Naive thymus-derived CD4-positive, alpha-beta T cell (primary cell): ENCODE measurements at regions of chr10 and their contacts with region 1.

Region 1: DNA sequence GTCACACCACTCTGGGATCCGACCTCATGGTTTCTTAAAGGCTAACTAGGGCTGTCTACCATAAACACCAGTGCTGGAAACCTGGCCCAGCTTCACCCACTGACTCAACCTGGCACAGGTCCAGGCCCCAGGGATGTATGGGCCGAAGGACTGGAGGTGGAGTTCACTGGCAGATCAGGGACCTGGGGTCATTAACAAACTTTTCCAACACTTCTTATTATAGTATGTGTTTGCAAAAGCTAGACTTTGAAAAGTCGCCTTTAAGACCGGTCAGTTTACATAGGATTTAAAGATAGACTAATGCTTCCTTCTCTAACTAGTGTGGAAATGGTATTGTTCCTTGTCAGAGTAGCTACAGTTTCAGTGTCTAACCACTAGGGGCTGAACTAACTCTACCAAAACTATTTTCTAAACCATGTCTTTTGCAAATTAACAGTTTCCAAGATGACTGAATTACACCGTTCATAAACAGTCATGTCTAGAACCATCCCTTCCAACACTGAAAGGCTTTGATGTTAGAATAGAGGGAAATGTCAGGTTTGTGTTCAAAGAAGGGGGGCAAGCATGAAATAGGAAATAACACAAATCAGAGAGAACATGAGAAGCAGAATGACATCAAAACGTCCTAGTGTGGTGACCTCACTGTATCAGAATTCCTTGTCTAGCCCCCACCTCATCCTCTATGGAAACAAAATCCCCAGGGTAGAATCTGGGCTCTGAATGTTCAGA is 29.7 kb downstream of the STN1 start:
- DNase-seq: peak in 7 of 9 donors; percentile 36 to 72 (median 59)
- ATAC-seq: peak; percentile 90
- H3K4me3 ChIP-seq: no peak overlapping the region
- H3K4me3 Mint-ChIP-seq: no peak overlapping the region
- H3K27ac ChIP-seq: no peak overlapping the region
- H3K27ac Mint-ChIP-seq: peak overlapping the region in 8 of 9 donors; percentile 5 to 83 (median 38)
- H3K4me1 ChIP-seq: peaks cover 4 to 5% of the 10 kb centered on the region in 2 donors
- H3K4me1 Mint-ChIP-seq: peaks cover 6 to 33% (median 20%) of the 10 kb centered on the region in 7 donors
- H3K27me3 ChIP-seq: no peaks in the 10 kb centered on the region
- H3K27me3 Mint-ChIP-seq: no peaks in the 10 kb centered on the region

Region 2: GRCh38 chr10:103901299-103901698 is 13.0 kb after region 1 on chr10:
- CTCF ChIA-PET with region 1: interaction called, 19 read pairs
- POLR2A ChIA-PET with region 1: interaction called, 4 read pairs
- intact Hi-C with region 1: no loop called
- DNase-seq: peak in 1 of 9 donors; percentile 20
- ATAC-seq: peak; percentile 65
- H3K4me3 ChIP-seq: no peak overlapping the region
- H3K4me3 Mint-ChIP-seq: peak overlapping the region; percentile 25 to 76 (median 60)
- H3K27ac ChIP-seq: peak overlapping the region; percentile 14
- H3K27ac Mint-ChIP-seq: peak overlapping the region in 8 of 9 donors; percentile 38 to 80 (median 65)
- H3K4me1 ChIP-seq: peaks cover 14 to 38% of the 10 kb centered on the region in 2 donors
- H3K4me1 Mint-ChIP-seq: peaks cover 12 to 58% (median 51%) of the 10 kb centered on the region in 7 donors
- H3K27me3 ChIP-seq: no peaks in the 10 kb centered on the region
- H3K27me3 Mint-ChIP-seq: no peaks in the 10 kb centered on the region

Region 3: DNA sequence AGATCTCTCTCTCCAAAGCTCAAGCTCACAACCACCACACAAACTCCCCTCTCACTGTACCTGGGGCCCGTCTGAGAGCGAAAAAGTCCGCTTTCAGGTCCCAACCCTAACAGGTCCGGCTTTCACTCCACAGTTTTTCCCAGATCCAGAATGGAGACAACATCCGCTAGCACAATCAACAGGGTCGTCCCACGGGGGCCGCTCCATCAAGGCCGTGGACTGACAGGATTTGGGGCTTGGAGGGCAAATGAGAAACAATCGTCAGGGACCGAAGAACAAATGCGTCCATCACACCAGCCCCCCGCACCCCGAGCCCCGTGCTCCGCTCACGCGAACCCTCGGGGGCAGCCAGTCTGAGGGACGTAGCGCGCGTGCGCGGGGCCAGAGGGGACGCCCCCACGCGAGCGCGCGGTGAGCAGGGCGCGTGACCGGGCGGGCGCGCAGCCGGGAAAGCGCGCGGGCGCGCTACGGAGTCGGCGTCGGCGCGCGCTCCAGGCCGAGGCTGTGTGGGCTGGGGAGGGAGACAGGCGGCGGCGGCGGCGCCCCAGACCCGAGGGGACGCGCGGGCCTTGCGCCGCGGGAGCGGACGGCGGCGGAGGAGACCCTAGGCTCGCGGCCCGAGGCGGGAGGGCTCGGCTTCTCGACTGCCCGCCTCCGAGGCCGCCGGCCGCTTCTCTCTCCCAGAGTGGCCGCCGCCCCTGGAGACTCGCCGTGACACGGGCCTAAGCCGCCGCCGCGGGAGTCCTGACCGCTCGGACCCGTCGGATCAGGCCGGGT is 78.6 kb after region 1 on chr10 and contains the start of gene SLK:
- CTCF ChIA-PET with region 1: interaction called, 3 read pairs
- POLR2A ChIA-PET with region 1: interaction called, 4 read pairs
- intact Hi-C with region 1: loop called (anchors 1 kb)
- DNase-seq: peak; percentile 74 to 93 (median 87)
- ATAC-seq: peak; percentile 96
- H3K4me3 ChIP-seq: peak within 1 kb of the TSS; percentile 81
- H3K4me3 Mint-ChIP-seq: peak within 1 kb of the TSS; percentile 93 to 100 (median 98)
- H3K27ac ChIP-seq: peak within 1 kb of the TSS; percentile 78
- H3K27ac Mint-ChIP-seq: peak within 1 kb of the TSS; percentile 91 to 96 (median 94)
- H3K4me1 ChIP-seq: peaks cover 3 to 11% of the 10 kb centered on the region in 2 donors
- H3K4me1 Mint-ChIP-seq: peaks cover 17 to 56% (median 44%) of the 10 kb centered on the region in 7 donors
- H3K27me3 ChIP-seq: no peaks in the 10 kb centered on the region
- H3K27me3 Mint-ChIP-seq: no peaks in the 10 kb centered on the region
- total RNA-seq, gene SLK: 21.4 to 32.2 (median 26.2) TPM

Region 4: DNA sequence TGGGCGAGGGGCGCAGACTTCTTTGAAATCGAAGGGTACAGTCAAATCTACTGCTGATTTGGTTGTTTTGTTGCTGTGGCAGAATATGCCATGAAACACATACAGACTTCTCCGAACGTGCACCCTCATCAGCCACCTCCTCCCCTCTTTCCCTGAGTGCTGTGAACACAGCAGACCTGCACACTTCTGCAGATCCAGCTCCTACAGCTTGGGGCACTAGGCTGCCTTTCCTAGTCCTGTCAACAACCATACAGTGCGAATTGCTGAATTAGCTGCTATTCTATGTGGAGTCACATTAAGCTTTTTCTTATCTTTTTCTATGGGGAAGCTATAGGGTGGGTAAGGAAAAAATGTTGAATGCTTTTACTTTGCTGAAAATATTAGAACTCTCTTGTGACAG is 139.9 kb after region 1 on chr10:
- CTCF ChIA-PET with region 1: interaction called, 4 read pairs
- POLR2A ChIA-PET with region 1: no interaction called
- intact Hi-C with region 1: loop called in 1 of 2 experiments (anchors 1 kb)
- DNase-seq: peak in 5 of 9 donors; percentile 11 to 29 (median 15)
- ATAC-seq: peak; percentile 75
- H3K4me3 ChIP-seq: no peak overlapping the region
- H3K4me3 Mint-ChIP-seq: no peak overlapping the region
- H3K27ac ChIP-seq: no peak overlapping the region
- H3K27ac Mint-ChIP-seq: peak overlapping the region in 4 of 9 donors; percentile 59 to 78 (median 69)
- H3K4me1 ChIP-seq: no peaks in the 10 kb centered on the region
- H3K4me1 Mint-ChIP-seq: peaks cover 0 to 6% (median 0%) of the 10 kb centered on the region in 7 donors
- H3K27me3 ChIP-seq: no peaks in the 10 kb centered on the region
- H3K27me3 Mint-ChIP-seq: no peaks in the 10 kb centered on the region

Region 5: GRCh38 chr10:104209575-104210198 is 321.4 kb after region 1 on chr10:
- CTCF ChIA-PET with region 1: interaction called, 8 read pairs
- POLR2A ChIA-PET with region 1: interaction called, 3 read pairs
- intact Hi-C with region 1: loop called (anchors 1 kb)
- DNase-seq: peak in 7 of 9 donors; percentile 20 to 52 (median 47)
- ATAC-seq: peak; percentile 70
- H3K4me3 ChIP-seq: no peak overlapping the region
- H3K4me3 Mint-ChIP-seq: no peak overlapping the region
- H3K27ac ChIP-seq: no peak overlapping the region
- H3K27ac Mint-ChIP-seq: no peak overlapping the region
- H3K4me1 ChIP-seq: no peaks in the 10 kb centered on the region
- H3K4me1 Mint-ChIP-seq: peaks cover 0 to 3% (median 0%) of the 10 kb centered on the region in 7 donors
- H3K27me3 ChIP-seq: no peaks in the 10 kb centered on the region
- H3K27me3 Mint-ChIP-seq: peaks cover 0 to 50% (median 12%) of the 10 kb centered on the region in 5 donors